AG04450 (cell line): ENCODE measurements at regions of chrX and their contacts with region 1.

Region 1: DNA sequence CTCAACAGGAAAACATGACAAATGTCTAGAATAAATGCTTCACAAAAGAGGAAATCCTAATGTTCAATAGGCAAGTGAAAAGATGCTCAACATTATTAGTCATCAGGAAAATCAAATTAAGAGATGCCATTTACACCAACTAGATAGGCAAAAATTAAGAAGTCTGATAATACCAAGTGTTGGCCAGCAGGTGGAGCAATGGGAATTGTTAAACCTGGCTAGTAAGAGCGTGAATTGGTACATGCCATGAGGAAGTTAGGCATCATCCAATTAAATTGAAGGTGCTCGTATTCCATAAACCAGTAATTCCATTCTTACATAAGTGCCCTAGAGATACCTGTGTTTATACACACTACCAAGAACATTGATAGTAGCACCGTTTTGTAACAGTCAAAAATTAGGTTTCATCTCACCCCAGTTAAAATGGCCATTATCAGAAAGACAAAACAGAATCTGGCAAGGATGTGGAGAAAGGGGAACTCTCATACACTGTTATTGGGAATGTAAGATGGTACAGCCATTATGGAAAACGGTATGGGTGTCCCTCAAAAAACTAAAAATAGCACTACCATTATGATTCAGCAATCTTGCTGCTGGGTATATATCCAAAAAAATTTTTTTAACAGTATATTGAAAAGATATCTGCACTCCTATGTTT is 14.0 kb upstream of the ZCCHC18 start:
- DNase-seq: peak; percentile 45
- H3K4me3 ChIP-seq: no peak overlapping the region
- H3K27ac ChIP-seq: no peak overlapping the region
- H3K27me3 ChIP-seq: no peaks in the 10 kb centered on the region
- CTCF ChIP-seq: peak; percentile 57

Region 2: DNA sequence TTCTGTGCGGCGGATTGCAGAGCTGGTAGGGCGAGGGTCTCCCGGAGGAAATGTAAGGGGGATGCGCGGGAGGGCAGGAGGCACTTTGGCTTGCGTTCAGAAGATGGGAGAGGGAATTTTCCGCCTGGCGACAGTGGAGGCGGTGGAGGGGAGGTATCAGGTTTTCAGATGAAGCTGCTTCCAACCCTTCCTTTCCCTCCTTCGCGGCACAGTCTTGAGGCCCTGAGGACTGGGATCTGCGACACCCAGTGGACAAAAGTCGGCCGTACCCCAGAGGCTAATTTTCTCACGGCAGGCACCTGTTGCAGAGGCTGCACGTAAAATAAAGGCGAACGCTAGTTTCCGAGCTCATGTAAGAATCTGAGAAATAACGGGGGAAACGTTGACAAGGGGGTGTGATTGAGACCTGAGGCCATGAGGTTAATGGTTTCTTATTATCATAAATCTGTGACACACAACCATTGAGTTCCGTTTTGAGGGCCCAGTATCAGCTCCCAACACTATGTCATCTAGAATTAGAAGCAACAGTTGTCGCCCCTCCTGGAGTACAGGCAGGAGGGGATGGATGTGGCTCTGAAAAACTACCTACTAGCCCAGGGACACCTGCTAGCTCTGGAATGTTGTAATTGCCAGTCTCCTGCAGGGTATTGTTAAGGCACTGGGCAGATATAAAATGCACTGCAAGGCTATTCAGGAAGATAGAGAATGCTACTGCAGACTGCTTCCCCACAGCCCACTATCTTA is 15.1 kb after region 1 on chrX:
- CTCF ChIA-PET with region 1: interaction called, 11 read pairs
- POLR2A ChIA-PET with region 1: interaction called, 3 read pairs
- DNase-seq: no peak
- H3K4me3 ChIP-seq: peak overlapping the region; percentile 71
- H3K27ac ChIP-seq: peak overlapping the region; percentile 31
- H3K27me3 ChIP-seq: no peaks in the 10 kb centered on the region
- CTCF ChIP-seq: peak; percentile 47